HEK293T (cell line): ENCODE measurements at regions of chr6 and their contacts with region 1.

Region 1: DNA sequence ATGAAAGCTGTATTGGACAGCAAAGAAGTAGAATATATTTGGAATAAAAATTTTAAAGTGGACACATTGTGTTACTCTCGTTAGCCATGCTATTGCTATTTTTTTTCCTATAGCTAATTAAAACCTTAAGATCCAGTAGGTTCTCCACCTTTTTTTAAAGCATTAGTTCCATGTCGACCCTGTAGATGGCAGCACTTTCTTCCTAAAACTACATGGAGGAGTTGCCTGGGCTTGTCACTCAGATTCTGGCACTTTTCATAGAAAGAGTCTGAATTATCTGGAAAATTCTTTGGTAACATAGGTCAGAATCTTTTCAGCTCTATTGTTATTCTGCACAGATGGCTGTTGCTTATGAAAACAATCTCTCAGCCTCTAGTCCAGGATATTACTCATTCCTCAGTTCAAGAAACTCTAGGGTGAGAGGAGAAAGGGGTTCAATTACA is 42.0 kb upstream of the ESR1 start:
- DNase-seq: peak; percentile 67

Region 2: DNA sequence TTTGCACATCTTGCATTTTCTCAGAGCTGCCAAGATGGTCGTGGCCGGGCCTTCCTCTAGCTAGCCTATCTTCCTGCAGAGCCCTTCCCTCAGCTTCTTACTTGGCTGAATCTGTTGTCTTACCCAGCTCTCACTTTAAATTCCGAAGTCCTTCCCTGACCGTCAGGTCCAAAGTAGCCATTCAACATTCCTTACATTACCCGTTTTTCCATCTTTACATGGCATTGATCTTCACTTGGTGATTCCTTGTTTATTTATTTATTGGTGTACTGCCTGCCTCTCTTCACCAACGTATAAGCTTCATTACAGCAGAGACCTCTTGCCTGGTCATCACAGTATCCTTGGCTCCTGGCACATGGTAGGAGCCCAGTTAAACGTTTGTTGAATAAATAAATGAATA is 95.3 kb before region 1 on chr6:
- CTCF ChIA-PET with region 1: no interaction called
- POLR2A ChIA-PET with region 1: no interaction called
- DNase-seq: no peak

Region 3: GRCh38 chr6:151753605-151754004 is 11.9 kb before region 1 on chr6:
- CTCF ChIA-PET with region 1: interaction called, 12 read pairs
- POLR2A ChIA-PET with region 1: no interaction called
- DNase-seq: no peak